H1 (cell line): ENCODE measurements at regions of chr2 and their contacts with region 1.

Region 1: DNA sequence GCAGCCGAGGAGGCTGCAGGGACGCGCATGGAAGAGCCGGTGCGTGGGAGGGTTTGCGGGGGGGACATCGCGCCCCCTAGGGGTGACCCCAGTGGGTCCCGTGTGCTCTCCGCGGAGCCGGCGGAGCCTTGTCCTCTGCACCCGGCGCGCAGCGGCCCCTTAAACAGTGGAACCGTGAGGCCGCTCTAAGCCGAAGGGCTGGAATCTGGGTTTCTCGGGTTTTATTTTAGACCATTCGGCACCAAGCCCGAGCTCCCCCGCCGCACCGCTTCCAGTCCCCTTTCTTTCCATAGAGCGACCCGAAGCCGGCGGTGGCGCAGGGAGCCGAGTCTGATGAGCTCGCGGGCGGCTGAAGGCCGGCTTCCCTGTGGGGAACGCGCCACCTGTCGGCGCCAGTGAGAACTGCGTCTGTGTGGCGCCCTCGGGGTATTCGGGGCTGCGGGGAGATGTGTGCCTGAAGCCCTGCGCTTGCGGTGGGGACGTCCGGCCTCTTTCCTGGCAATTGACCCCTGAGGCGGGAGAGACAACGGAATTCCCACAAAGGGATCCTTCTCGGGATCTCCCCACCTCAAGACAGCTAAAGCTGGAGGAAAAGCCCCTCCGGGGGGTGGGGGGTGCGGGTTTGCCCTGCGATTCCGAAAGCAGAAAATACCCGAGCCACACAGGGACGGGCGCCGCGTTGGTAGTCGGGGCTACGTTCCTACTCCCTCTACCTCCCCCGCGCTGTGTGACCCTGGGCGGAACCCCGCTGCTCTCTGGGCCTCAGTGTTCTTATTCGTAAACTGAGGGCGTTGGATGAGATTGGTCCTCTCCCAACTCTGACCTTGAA is 8.2 kb upstream of the EN1 start:
- DNase-seq: peak; percentile 67 to 99
- H3K4me3 ChIP-seq: peak overlapping the region in 3 of 4 experiments; percentile 7 to 56 (median 14); a peak in 4 of 8 replicates
- H3K27ac ChIP-seq: no peak overlapping the region
- H3K4me1 ChIP-seq: peaks cover 2 to 64% (median 39%) of the 10 kb centered on the region in 4 experiments
- H3K27me3 ChIP-seq: peaks cover 88 to 100% (median 96%) of the 10 kb centered on the region in 4 experiments
- CTCF ChIP-seq: peak in 2 of 3 experiments; percentile 87 to 92; a peak in 3 of 4 replicates
- EP300 ChIP-seq: no peak
- POLR2A ChIP-seq: no peak
- RAD21 ChIP-seq: peak; percentile 87 to 90

Region 2: DNA sequence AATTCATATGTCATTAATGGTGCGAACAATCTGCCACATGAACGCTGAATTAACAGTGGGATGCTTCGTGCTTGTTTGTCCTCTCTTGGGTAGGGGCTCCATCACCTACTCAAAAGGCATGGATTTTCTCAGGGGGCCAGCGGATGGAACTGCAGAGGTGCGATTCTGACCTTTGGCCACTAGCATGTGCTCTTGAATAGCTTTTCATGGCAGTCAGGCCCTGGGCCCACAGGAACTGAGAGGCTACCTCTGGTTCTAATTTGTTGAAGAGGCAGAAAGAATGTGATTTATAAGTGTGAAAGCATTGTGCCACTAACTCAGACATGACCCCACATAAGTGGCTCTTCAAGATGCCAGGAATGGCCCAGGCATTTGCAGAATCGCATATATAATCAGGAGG is 484.1 kb before region 1 on chr2:
- CTCF ChIA-PET with region 1: interaction called, 28 read pairs
- POLR2A ChIA-PET with region 1: no interaction called
- DNase-seq: peak; percentile 38 to 62
- H3K4me3 ChIP-seq: no peak overlapping the region
- H3K27ac ChIP-seq: no peak overlapping the region
- H3K4me1 ChIP-seq: peaks cover 3 to 7% (median 5%) of the 10 kb centered on the region in 4 experiments; a peak in 4 of 7 replicates
- H3K27me3 ChIP-seq: peaks cover 0 to 3% (median 0%) of the 10 kb centered on the region in 4 experiments; a peak in 2 of 7 replicates
- CTCF ChIP-seq: peak; percentile 80 to 96 (median 82)
- EP300 ChIP-seq: no peak
- POLR2A ChIP-seq: no peak
- RAD21 ChIP-seq: peak; percentile 99

Region 3: GRCh38 chr2:118763797-118764196 is 91.9 kb before region 1 on chr2:
- CTCF ChIA-PET with region 1: interaction called, 10 read pairs
- POLR2A ChIA-PET with region 1: no interaction called
- DNase-seq: peak; percentile 27 to 65
- H3K4me3 ChIP-seq: no peak overlapping the region
- H3K27ac ChIP-seq: no peak overlapping the region
- H3K4me1 ChIP-seq: peaks cover 0 to 2% (median 0%) of the 10 kb centered on the region in 4 experiments; a peak in 2 of 7 replicates
- H3K27me3 ChIP-seq: peaks cover 0 to 10% (median 6%) of the 10 kb centered on the region in 4 experiments; a peak in 5 of 7 replicates
- CTCF ChIP-seq: peak; percentile 56 to 81 (median 75)
- EP300 ChIP-seq: no peak
- POLR2A ChIP-seq: no peak
- RAD21 ChIP-seq: peak; percentile 84 to 86

Region 4: DNA sequence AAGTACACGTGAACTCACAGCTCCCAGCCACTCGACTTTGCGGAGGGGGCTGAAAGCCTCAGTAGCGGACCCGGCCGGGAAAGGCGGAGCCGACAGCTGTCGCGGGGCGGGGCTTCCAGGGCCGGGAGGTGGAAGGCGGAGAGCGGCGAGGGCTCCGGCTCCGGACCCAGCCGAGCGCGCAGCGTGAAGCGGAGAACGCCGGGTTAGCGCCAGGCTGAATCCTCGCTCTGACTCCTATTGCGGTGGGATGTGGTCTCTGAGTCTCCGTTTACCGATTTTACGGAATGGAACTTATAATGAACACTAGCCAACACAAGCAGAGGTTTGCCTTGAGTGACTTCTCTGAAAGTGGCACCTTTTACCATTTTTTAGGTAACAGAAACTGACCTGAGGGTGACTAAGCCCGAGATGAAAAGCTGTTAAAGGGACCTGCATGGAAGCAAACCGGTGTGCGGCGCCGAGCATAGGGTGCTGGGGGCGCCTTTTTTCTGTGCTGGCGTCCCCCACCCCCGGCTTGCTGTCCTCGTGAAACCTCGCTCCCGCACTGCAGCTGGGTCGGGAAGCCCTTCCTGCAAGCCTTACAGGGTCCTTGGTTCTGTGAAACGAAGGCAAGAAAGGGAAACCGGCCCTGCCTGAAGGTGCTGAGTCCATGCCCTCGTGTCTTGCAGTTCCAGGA is 81.1 kb before region 1 on chr2:
- CTCF ChIA-PET with region 1: interaction called, 28 read pairs
- POLR2A ChIA-PET with region 1: no interaction called
- DNase-seq: peak; percentile 21 to 88
- H3K4me3 ChIP-seq: peak overlapping the region; percentile 40 to 66 (median 52)
- H3K27ac ChIP-seq: no peak overlapping the region
- H3K4me1 ChIP-seq: no peaks in the 10 kb centered on the region; a peak in 3 of 7 replicates
- H3K27me3 ChIP-seq: peaks cover 5 to 38% (median 25%) of the 10 kb centered on the region in 4 experiments
- CTCF ChIP-seq: no peak
- EP300 ChIP-seq: no peak
- POLR2A ChIP-seq: no peak
- RAD21 ChIP-seq: no peak

Region 5: DNA sequence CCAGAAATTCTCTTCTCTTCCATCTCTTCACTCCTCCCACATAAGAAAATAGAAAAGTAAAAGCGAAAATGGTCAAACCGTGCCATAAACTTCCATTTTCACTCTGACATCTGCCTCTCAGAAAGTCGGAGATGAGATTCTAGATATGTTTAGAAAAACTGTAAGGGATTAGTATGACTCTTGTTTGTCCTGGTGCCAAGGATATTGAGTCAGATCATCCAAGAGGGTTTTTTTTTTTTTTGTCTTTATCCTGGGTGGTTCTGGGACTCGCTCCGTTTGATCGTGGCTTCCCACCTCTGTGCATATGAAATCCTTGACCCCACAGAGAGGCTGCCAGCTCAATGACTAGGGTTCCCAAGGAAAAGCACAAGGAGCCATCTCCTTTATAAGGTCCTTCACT is 25.5 kb before region 1 on chr2:
- CTCF ChIA-PET with region 1: interaction called, 13 read pairs
- POLR2A ChIA-PET with region 1: interaction called, 4 read pairs
- DNase-seq: no peak
- H3K4me3 ChIP-seq: no peak overlapping the region
- H3K27ac ChIP-seq: no peak overlapping the region
- H3K4me1 ChIP-seq: peaks cover 0 to 19% (median 16%) of the 10 kb centered on the region in 4 experiments; a peak in 6 of 7 replicates
- H3K27me3 ChIP-seq: peaks cover 41 to 56% (median 49%) of the 10 kb centered on the region in 4 experiments
- CTCF ChIP-seq: no peak
- EP300 ChIP-seq: no peak
- POLR2A ChIP-seq: no peak
- RAD21 ChIP-seq: no peak

Region 6: DNA sequence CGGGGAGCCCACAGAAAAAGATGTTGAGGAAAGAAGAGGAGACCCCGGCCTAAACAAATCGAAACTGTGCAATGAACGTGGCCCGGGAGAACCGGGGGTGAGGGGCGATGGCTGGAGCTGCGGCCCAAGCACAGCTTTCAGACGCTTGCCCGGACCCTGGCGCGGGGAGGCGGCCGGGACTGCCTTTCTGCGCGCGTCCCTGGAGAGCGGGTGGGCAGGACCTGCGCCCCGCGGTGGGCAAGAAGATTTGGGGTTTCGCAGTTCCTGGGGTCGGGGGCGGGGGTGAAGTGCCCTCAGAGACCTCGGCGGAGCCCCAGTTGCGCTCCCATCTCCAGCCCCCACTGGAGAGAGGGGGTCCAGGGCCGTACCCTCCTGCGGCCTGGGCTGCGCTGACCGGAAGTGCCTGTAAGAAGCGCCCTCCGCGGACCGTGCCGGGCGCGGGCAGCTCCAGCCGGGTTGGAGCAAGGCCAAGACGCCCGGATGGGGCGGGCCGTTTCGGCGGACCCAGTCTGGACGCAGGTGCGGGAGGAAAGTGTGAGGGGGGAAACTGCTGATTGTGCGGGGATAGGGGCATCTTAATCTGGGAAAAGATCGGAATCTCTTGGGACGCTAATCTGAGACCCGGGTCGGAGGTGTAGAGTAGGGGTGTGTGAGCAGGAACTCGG is 19.8 kb before region 1 on chr2:
- CTCF ChIA-PET with region 1: interaction called, 84 read pairs
- POLR2A ChIA-PET with region 1: interaction called, 4 read pairs
- DNase-seq: no peak
- H3K4me3 ChIP-seq: peak overlapping the region; percentile 32 to 63 (median 44)
- H3K27ac ChIP-seq: no peak overlapping the region
- H3K4me1 ChIP-seq: peaks cover 5 to 39% (median 24%) of the 10 kb centered on the region in 4 experiments
- H3K27me3 ChIP-seq: peaks cover 97 to 100% (median 99%) of the 10 kb centered on the region in 4 experiments
- CTCF ChIP-seq: no peak
- EP300 ChIP-seq: no peak
- POLR2A ChIP-seq: no peak
- RAD21 ChIP-seq: no peak

Region 7: DNA sequence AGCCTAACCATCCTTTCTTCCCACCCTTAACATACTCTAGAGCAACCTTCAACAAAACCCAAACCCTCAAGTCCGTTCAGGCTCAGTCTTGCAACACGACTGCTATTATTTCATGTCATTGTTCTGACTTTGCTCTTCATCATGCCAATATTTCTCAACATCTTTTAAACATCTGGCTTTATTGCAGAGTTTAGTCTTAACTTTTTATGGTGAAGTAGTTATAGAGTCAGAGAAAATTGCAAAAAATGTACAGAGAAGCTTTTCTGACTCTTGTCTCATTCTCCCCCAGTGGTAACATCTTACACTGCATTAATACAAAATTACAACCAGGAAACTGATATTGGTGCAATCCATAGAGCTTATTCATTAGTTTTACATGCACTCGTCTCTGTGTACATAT is 90.2 kb after region 1 on chr2:
- CTCF ChIA-PET with region 1: no interaction called
- POLR2A ChIA-PET with region 1: no interaction called
- DNase-seq: no peak
- H3K4me3 ChIP-seq: no peak overlapping the region
- H3K27ac ChIP-seq: no peak overlapping the region
- H3K4me1 ChIP-seq: no peaks in the 10 kb centered on the region
- H3K27me3 ChIP-seq: no peaks in the 10 kb centered on the region
- CTCF ChIP-seq: no peak
- EP300 ChIP-seq: no peak
- POLR2A ChIP-seq: no peak
- RAD21 ChIP-seq: no peak